ENCODE measurements at regions of chr2 and their contacts with region 1.

Region 1: GRCh38 chr2:37877457-37878315 is 47.4 kb upstream of the RMDN2 start:
- DNase-seq: no peak
- H3K4me3 ChIP-seq: no peak overlapping the region
- H3K27ac ChIP-seq: no peak overlapping the region
- H3K27me3 ChIP-seq: no peaks in the 10 kb centered on the region
- CTCF ChIP-seq: peak; percentile 65

Region 2: GRCh38 chr2:37389989-37390765 is 487.5 kb before region 1 on chr2:
- CTCF ChIA-PET with region 1: interaction called, 277 read pairs
- POLR2A ChIA-PET with region 1: no interaction called
- DNase-seq: no peak
- H3K4me3 ChIP-seq: no peak overlapping the region; the same call in 1 of the 2 replicates
- H3K27ac ChIP-seq: peak overlapping the region; percentile 85
- H3K27me3 ChIP-seq: no peaks in the 10 kb centered on the region
- CTCF ChIP-seq: no peak

Region 3: GRCh38 chr2:37472959-37473358 is 404.7 kb before region 1 on chr2:
- CTCF ChIA-PET with region 1: interaction called, 12 read pairs
- POLR2A ChIA-PET with region 1: no interaction called
- DNase-seq: no peak
- H3K4me3 ChIP-seq: no peak overlapping the region
- H3K27ac ChIP-seq: no peak overlapping the region
- H3K27me3 ChIP-seq: no peaks in the 10 kb centered on the region
- CTCF ChIP-seq: no peak

Region 4: DNA sequence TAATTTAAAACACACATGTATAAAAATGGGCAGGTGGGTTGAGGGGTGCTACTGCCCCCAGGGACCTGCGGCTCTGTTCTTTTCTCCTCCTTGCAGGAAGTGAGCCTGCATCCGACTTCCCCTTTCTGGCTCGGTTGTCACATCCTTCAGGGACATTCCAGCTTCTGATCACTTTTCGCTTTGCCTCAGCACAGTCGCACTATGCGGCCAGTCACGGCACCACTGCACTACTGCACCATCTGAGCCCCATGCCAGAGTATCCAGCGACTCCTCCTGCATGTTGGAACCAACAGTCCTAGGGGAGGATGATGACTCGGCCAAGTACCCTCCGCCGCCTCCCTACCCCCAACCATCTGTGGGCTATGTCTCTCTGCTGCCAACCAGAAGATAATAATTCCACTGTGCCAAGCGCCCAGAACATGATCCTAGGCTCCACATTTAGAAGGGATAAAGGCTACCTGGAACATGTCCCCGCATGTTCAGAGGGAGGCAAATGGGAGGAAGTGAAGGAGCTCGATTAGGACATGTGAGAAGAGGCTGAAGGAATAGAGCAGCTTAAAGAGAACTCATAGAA is 223.8 kb before region 1 on chr2:
- CTCF ChIA-PET with region 1: interaction called, 28 read pairs
- POLR2A ChIA-PET with region 1: no interaction called
- DNase-seq: no peak
- H3K4me3 ChIP-seq: no peak overlapping the region
- H3K27ac ChIP-seq: peak overlapping the region; percentile 54
- H3K27me3 ChIP-seq: no peaks in the 10 kb centered on the region
- CTCF ChIP-seq: no peak

Region 5: DNA sequence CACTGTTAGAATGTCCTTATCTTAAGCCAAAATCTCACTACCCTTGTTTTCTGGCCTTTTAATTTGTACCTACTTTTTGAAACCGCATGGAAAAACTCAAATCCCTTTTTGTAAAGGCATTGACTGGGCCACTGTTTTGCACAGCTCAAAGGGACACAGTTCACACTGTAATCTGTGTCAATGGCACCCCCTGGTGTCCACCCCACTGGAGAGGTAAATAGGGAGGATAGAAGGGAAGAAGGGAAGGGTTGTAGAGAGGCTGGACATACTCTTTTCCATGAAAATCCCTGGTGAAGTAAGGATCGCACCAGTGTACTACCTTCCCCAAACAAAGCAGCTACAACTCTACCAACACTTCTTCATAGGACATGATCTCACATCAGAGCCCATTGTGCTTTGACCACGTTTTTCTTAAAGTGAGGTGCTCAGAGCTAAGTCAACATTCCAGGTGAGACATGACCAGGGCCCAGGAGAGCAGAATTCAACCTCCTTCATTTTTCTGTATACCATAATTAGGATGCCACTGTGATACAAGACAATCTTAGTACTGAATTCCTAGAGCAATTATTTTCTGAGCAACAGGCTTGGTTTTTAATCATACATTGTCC is 45.0 kb before region 1 on chr2:
- CTCF ChIA-PET with region 1: interaction called, 25 read pairs
- POLR2A ChIA-PET with region 1: no interaction called
- DNase-seq: peak; percentile 64
- H3K4me3 ChIP-seq: no peak overlapping the region
- H3K27ac ChIP-seq: no peak overlapping the region
- H3K27me3 ChIP-seq: no peaks in the 10 kb centered on the region
- CTCF ChIP-seq: peak; percentile 85

Region 6: GRCh38 chr2:37896314-37896713 is 18.6 kb after region 1 on chr2:
- CTCF ChIA-PET with region 1: interaction called, 20 read pairs
- POLR2A ChIA-PET with region 1: no interaction called
- DNase-seq: no peak
- H3K4me3 ChIP-seq: no peak overlapping the region
- H3K27ac ChIP-seq: no peak overlapping the region
- H3K27me3 ChIP-seq: no peaks in the 10 kb centered on the region
- CTCF ChIP-seq: no peak

Measured in AG04450 (cell line).